ENCODE measurements at regions of chr6 and their contacts with region 1.

Region 1: DNA sequence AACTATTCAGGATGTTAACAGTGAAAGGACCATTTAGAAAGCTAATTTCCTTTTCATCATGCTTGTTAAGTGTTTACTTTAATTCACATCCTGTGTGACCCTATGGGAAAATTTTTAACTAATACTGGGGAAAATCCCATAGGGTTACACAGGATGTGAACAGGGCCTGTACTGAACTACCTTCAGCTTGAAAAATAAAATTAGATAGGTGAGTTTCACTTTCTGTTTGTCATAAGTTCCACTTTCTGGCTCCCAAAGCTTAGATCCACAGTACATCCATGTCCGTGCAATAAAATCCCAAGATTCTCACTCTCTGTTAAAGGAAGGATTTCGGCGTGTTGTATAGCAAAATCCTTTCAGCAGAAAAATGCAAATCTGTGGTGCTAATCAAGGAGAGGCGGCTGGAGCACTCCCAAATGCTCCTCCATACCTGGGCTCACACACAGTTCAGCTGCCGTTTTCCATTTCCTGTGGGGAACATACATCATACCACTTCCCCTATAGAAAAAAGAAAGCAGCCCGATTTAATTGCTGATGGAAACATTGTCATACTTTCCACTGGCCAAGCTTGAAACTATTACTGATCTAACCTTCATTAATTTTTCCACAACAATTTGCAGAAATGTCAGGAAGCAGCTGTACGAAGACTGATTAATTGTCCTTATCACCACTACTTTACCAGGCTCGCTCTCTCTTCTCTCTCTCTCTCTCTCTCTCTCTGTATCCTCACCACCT is 125.2 kb downstream of the HIVEP2 start:
- DNase-seq: peak in 6 of 9 donors; percentile 27 to 80 (median 44)
- ATAC-seq: peak; percentile 75
- H3K4me3 ChIP-seq: peak overlapping the region; percentile 66
- H3K4me3 Mint-ChIP-seq: peak overlapping the region; percentile 72 to 93 (median 89)
- H3K27ac ChIP-seq: peak overlapping the region; percentile 82
- H3K27ac Mint-ChIP-seq: peak overlapping the region; percentile 68 to 99 (median 92)
- H3K4me1 ChIP-seq: peaks cover 59 to 67% of the 10 kb centered on the region in 2 donors
- H3K4me1 Mint-ChIP-seq: peaks cover 52 to 95% (median 83%) of the 10 kb centered on the region in 7 donors
- H3K27me3 ChIP-seq: no peaks in the 10 kb centered on the region
- H3K27me3 Mint-ChIP-seq: no peaks in the 10 kb centered on the region

Region 2: DNA sequence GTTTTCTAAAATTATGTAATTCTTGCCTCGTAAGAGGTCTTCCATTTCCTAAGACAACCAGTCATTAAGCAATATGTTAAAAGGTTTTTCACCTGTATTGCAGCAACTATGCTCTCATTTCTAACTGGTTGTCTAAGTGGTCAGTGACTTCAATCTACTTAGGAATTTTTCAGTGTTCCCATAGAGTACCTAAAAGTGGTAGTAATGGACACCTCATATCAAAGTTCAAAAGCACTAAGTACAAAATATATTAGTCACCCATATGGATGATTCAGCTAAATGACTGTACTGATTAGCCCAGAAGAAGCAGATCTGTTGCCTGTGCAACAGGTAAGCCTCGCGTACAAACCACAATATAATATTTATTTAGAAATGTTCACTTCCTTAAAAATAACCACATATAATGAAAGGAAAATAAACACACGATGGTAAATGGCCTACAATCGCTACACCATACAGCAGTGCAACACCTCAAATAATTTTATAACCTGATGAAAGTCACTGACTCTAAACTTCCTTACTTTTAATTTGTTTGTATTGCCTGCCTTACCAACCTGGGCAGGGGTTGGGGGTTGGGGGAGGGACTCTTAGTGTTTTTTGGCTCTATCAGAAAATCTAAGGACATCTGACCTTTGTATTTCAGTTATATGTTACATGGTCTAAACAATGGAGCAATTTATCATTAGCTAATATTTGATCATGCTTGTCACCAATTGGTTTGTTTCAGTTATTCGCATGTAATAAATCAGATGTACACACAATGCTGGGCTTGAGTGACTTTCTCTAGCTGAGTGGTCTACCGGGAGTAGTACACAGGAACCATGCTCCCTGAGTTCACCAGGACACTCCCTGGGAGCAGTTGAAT is 19.3 kb after region 1 on chr6:
- CTCF ChIA-PET with region 1: interaction called, 5 read pairs
- POLR2A ChIA-PET with region 1: interaction called, 71 read pairs
- intact Hi-C with region 1: loop called in 1 of 2 experiments (anchors 1 kb)
- DNase-seq: no peak
- ATAC-seq: no peak
- H3K4me3 ChIP-seq: peak overlapping the region; percentile 7
- H3K4me3 Mint-ChIP-seq: peak overlapping the region in 9 of 10 donors; percentile 31 to 65 (median 46)
- H3K27ac ChIP-seq: no peak overlapping the region
- H3K27ac Mint-ChIP-seq: peak overlapping the region; percentile 33 to 91 (median 65)
- H3K4me1 ChIP-seq: peaks cover 40 to 47% of the 10 kb centered on the region in 2 donors
- H3K4me1 Mint-ChIP-seq: peaks cover 35 to 95% (median 80%) of the 10 kb centered on the region in 7 donors
- H3K27me3 ChIP-seq: no peaks in the 10 kb centered on the region
- H3K27me3 Mint-ChIP-seq: no peaks in the 10 kb centered on the region

Region 3: GRCh38 chr6:142857233-142857761 is 37.5 kb after region 1 on chr6:
- CTCF ChIA-PET with region 1: interaction called, 3 read pairs
- POLR2A ChIA-PET with region 1: interaction called, 15 read pairs
- intact Hi-C with region 1: loop called (anchors 1 to 5 kb)
- DNase-seq: peak in 7 of 9 donors; percentile 54 to 77 (median 68)
- ATAC-seq: peak; percentile 59
- H3K4me3 ChIP-seq: peak overlapping the region; percentile 54
- H3K4me3 Mint-ChIP-seq: peak overlapping the region; percentile 72 to 88 (median 84)
- H3K27ac ChIP-seq: peak overlapping the region; percentile 86
- H3K27ac Mint-ChIP-seq: peak overlapping the region; percentile 91 to 100 (median 98)
- H3K4me1 ChIP-seq: peaks cover 62 to 81% of the 10 kb centered on the region in 2 donors
- H3K4me1 Mint-ChIP-seq: peaks cover 54 to 98% (median 93%) of the 10 kb centered on the region in 7 donors
- H3K27me3 ChIP-seq: no peaks in the 10 kb centered on the region
- H3K27me3 Mint-ChIP-seq: no peaks in the 10 kb centered on the region

Region 4: GRCh38 chr6:142913511-142914047 is 93.8 kb after region 1 on chr6:
- CTCF ChIA-PET with region 1: no interaction called
- POLR2A ChIA-PET with region 1: interaction called, 3 read pairs
- intact Hi-C with region 1: loop called in 1 of 2 experiments (anchors 1 kb)
- DNase-seq: peak; percentile 34 to 83 (median 80)
- ATAC-seq: peak; percentile 93
- H3K4me3 ChIP-seq: peak overlapping the region; percentile 55
- H3K4me3 Mint-ChIP-seq: peak overlapping the region; percentile 71 to 94 (median 87)
- H3K27ac ChIP-seq: peak overlapping the region; percentile 82
- H3K27ac Mint-ChIP-seq: peak overlapping the region in 7 of 9 donors; percentile 95 to 100 (median 99)
- H3K4me1 ChIP-seq: peaks cover 52 to 75% of the 10 kb centered on the region in 2 donors
- H3K4me1 Mint-ChIP-seq: peaks cover 52 to 96% (median 93%) of the 10 kb centered on the region in 7 donors
- H3K27me3 ChIP-seq: no peaks in the 10 kb centered on the region
- H3K27me3 Mint-ChIP-seq: no peaks in the 10 kb centered on the region

Measured in naive thymus-derived CD4-positive, alpha-beta T cell (primary cell).